HEK293T (cell line): ENCODE measurements at regions of chr1 and their contacts with region 1.

Region 1: GRCh38 chr1:197902454-197903195 is at the start of gene C1orf53:
- DNase-seq: peak; percentile 97

Region 2: GRCh38 chr1:197890936-197891335 is 11.7 kb before region 1 on chr1:
- CTCF ChIA-PET with region 1: interaction called, 5 read pairs
- POLR2A ChIA-PET with region 1: interaction called, 10 read pairs
- DNase-seq: no peak

Region 3: GRCh38 chr1:197915862-197916499 is 13.4 kb after region 1 on chr1:
- CTCF ChIA-PET with region 1: interaction called, 4 read pairs
- POLR2A ChIA-PET with region 1: interaction called, 70 read pairs
- DNase-seq: peak; percentile 84